ENCODE measurements at regions of chr16 and their contacts with region 1.

Region 1: DNA sequence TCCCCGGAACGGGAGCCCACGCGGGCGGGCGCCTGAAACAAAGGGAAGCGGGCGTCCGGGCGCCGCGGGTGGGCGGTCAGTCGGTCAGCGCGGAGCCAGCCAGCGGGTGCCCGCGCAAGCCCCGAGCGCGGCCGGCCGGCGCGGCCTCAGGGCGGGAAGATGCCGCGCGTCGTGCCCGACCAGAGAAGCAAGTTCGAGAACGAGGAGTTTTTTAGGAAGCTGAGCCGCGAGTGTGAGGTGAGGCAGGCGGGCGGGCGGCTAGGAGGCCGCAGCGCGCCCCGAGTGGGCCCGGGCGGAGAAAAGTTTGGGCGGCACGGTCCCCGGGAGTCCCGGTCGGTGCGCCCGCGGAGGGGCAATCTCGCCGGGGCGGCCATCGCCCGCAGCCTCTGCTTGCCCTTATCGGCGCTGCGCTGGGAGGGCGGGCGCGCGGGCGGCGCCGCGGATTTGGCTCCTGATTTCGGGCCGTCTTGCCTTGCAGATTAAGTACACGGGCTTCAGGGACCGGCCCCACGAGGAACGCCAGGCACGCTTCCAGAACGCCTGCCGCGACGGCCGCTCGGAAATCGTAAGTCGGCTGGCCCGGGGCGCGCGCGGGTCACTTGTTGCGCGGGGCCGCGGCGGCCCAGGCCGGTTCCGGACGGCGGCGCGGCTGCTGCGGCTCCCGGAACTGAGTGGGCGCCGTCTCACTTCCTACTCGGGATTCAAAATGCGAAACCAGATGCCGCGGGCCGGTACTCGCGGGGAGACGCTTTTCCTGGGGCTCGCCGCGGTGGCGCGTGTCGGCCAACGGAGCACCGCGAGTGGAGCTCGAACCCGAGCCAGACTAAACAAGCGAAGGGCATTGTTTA is 524 bp downstream of the CBFB start:
- DNase-seq: no peak
- ATAC-seq: peak; percentile 66
- H3K4me3 ChIP-seq: peak overlapping the region; percentile 62 to 70
- H3K27ac ChIP-seq: peak overlapping the region; percentile 89
- H3K4me1 ChIP-seq: peaks cover 13% of the 10 kb centered on the region
- H3K27me3 ChIP-seq: no peaks in the 10 kb centered on the region
- CTCF ChIP-seq: no peak

Region 2: DNA sequence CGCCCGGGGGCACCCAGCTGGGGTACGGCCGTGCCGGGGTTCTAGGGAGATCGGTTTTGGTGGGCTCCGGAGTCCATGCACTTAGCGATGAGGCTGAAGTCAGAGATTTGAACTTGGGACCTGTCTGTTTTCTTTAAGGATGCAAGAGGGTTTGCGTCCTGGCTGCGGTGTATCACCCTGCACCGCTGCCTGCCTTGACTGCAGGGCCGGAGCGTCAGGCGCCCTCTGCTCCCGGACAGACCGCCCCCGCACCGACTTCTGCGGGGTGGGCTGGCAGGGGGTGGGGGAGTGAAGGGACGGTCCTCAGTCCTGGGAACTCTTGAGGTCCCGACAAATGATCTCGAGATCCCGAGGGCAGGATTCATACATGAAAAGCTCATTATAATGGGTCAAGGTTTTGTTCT is 148.5 kb before region 1 on chr16:
- CTCF ChIA-PET with region 1: no interaction called
- POLR2A ChIA-PET with region 1: no interaction called
- in situ Hi-C with region 1: no loop called
- intact Hi-C with region 1: no loop called
- DNase-seq: no peak
- ATAC-seq: peak; percentile 14; the same call in 1 of the 2 replicates
- H3K4me3 ChIP-seq: peak overlapping the region; percentile 69 to 81
- H3K27ac ChIP-seq: peak overlapping the region; percentile 71
- H3K4me1 ChIP-seq: peaks cover 12% of the 10 kb centered on the region; the same call in 1 of the 2 replicates
- H3K27me3 ChIP-seq: no peaks in the 10 kb centered on the region
- CTCF ChIP-seq: no peak

Region 3: DNA sequence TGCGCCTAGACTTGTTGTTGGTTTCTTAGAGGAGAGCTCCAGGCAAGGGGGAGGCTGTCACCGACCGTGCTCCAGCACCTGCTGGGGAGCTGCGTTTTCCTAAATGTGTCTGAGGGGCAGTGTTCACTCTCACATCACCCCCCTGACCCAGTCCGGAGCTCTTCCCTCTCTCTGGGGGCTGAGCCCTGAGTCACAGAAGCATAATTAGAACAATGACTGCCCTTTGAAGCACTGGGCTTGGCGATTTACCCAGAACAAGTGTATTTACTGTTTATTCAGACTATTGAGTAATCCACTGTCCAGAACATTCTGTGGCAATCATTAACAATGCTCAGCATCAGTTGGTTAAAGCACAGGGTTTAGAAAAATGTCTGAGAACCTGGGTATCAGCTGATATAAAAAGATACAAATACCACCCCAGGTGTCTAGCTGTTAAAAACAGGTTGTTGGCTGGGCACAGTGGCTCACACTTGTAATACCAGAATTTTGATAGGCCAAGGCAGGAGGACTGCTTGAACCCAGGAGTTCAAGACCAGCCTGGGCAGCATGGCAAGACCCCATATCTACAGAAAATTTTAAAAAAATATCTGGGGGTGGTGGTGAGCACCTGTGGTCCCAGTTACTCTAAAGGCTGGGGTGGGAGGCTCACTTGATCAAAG is 33.0 kb before region 1 on chr16:
- CTCF ChIA-PET with region 1: interaction called, 12 read pairs
- POLR2A ChIA-PET with region 1: no interaction called
- in situ Hi-C with region 1: no loop called
- intact Hi-C with region 1: no loop called
- DNase-seq: no peak
- ATAC-seq: no peak
- H3K4me3 ChIP-seq: no peak overlapping the region
- H3K27ac ChIP-seq: no peak overlapping the region
- H3K4me1 ChIP-seq: no peaks in the 10 kb centered on the region
- H3K27me3 ChIP-seq: no peaks in the 10 kb centered on the region
- CTCF ChIP-seq: no peak

Region 4: GRCh38 chr16:67120025-67120424 is 90.6 kb after region 1 on chr16:
- CTCF ChIA-PET with region 1: interaction called, 11 read pairs
- POLR2A ChIA-PET with region 1: no interaction called
- in situ Hi-C with region 1: no loop called
- intact Hi-C with region 1: no loop called
- DNase-seq: no peak
- ATAC-seq: no peak
- H3K4me3 ChIP-seq: no peak overlapping the region
- H3K27ac ChIP-seq: no peak overlapping the region
- H3K4me1 ChIP-seq: no peaks in the 10 kb centered on the region
- H3K27me3 ChIP-seq: no peaks in the 10 kb centered on the region
- CTCF ChIP-seq: no peak

Region 5: GRCh38 chr16:67155295-67156142 is 126.0 kb after region 1 on chr16:
- CTCF ChIA-PET with region 1: no interaction called
- POLR2A ChIA-PET with region 1: no interaction called
- in situ Hi-C with region 1: no loop called
- intact Hi-C with region 1: no loop called
- DNase-seq: no peak
- ATAC-seq: peak; percentile 57
- H3K4me3 ChIP-seq: peak overlapping the region in 1 of 2 experiments; percentile 16; a peak in 2 of 4 replicates
- H3K27ac ChIP-seq: no peak overlapping the region
- H3K4me1 ChIP-seq: peaks cover 8% of the 10 kb centered on the region
- H3K27me3 ChIP-seq: no peaks in the 10 kb centered on the region
- CTCF ChIP-seq: peak; percentile 96

Region 6: DNA sequence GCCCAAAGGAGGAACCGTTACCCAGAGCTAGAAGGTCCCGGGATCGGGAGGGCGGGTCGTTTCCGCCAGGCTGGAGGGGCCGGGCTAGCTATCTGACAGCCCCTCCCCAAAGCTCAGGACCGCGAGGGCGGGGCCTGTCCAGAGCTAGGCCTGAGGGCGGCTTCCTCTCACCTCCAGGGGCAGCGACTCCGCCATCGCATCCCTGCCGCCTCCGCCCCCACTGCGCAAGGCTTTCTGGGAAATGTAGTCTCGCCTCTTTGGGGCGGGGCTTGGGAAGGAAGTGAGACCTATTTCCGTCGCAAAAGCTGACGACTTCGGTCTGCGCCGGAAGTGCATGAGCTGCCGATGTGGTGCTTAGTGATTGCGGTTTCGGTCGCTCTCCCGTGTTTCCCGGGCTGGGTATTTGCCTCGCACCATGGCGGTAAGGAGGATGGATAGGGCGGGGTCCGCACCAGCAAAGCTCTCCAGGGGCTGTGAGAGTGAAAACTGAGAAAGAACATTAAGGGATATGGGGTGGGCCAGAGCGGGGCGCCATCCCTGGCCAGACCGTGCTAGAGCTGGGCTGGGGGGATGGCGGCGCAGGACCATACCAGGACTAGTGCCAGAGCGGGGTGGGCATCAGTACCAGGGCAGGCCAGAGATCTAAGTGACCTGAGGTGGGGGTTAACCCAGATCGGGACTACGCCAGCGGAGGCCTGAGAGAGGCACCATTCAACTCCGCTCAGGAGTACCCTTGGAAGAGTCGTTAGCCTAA is 197.5 kb after region 1 on chr16 and contains the start of gene TMEM208:
- CTCF ChIA-PET with region 1: no interaction called
- POLR2A ChIA-PET with region 1: no interaction called
- in situ Hi-C with region 1: no loop called
- intact Hi-C with region 1: no loop called
- DNase-seq: peak; percentile 84
- ATAC-seq: peak; percentile 96
- H3K4me3 ChIP-seq: peak within 1 kb of the TSS; percentile 67 to 99
- H3K27ac ChIP-seq: peak within 1 kb of the TSS; percentile 88
- H3K4me1 ChIP-seq: peaks cover 4% of the 10 kb centered on the region; the same call in 1 of the 2 replicates
- H3K27me3 ChIP-seq: no peaks in the 10 kb centered on the region
- CTCF ChIP-seq: no peak; the same call in 1 of the 2 replicates
- total RNA-seq, gene TMEM208: 25.6 TPM

Measured in Panc1 (cell line).